T-cell (primary cell): ENCODE measurements at regions of chr5 and their contacts with region 1.

Region 1: DNA sequence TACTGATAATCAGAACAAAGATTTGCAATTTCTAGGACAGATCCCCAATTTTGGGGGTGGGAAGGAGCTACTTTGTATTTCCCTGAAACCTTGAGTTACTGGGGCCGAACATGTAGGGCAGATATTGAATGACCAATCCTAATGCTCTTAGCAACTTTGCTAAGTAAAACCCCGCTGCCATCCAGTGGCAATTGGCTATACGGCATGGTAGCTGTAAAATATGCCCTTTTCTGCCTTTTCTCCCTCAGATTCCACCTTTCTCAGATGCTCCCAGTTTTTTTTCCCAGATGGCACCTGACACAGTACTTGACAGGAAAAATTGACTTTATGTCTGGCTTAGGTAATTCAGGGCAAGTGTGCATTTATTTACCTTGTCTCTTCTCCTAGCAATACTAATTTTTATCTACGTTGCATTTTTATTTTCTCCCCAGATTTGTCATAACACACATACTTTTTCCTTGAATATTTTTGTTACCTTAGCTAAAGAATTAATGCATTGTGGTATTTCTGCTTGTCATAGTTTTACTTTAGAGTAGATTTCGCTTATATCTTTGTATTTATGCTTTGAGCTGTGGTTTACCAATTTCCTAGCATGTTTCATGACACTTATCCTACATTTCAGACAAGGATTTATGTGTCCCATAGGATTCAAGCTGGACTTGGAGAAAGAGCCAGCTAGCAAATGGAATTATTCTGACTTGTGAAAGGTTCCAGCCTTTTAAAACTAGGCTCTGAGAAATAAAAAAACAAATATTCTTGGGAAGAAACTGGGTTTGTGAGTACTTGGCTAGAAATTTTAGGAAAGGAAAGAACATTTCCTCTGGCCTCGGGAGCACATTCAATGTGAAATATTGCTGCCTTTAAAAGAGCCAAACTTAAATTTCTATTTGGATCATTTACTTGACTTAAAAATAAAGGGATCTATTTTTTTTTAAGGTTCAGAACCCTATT is 37.4 kb downstream of the PIK3R1 start:
- DNase-seq: peak in 25 of 35 experiments; percentile 10 to 71 (median 42)
- ATAC-seq: no peak
- H3K4me3 ChIP-seq: no peak overlapping the region
- H3K4me3 Mint-ChIP-seq: no peak overlapping the region
- H3K27ac ChIP-seq: peak overlapping the region; percentile 58
- H3K27ac Mint-ChIP-seq: peak overlapping the region; percentile 84 to 95
- H3K4me1 ChIP-seq: peaks cover 48 to 60% of the 10 kb centered on the region in 2 experiments
- H3K4me1 Mint-ChIP-seq: peaks cover 90 to 96% (median 93%) of the 10 kb centered on the region in 3 donors
- H3K27me3 ChIP-seq: no peaks in the 10 kb centered on the region
- H3K27me3 Mint-ChIP-seq: no peaks in the 10 kb centered on the region

Region 2: DNA sequence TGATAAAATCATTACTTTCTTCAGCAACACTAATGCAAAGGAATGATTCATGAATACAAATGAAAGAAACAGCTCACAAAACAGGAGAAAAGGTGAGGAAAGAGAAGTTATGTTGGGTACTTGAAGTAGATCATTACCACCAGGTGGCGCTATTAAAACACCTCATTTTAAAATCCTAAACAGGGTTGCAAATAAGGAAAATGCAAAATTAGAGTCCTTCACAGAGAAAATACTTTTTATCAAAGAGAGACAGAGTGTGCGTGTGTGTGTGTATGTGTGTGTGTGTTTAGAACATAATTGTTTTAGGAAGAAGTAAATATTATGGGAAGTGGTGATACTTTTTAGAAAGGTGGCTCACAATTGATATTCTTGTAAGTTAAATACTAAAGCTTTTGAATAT is 1006.8 kb before region 1 on chr5:
- CTCF ChIA-PET with region 1: interaction called, 20 to 35 read pairs
- POLR2A ChIA-PET with region 1: no interaction called
- DNase-seq: peak in 8 of 35 experiments; percentile 5 to 84 (median 22)
- ATAC-seq: peak in 2 of 4 experiments; percentile 47 to 69
- H3K4me3 ChIP-seq: no peak overlapping the region
- H3K4me3 Mint-ChIP-seq: no peak overlapping the region
- H3K27ac ChIP-seq: no peak overlapping the region
- H3K27ac Mint-ChIP-seq: no peak overlapping the region
- H3K4me1 ChIP-seq: peaks cover 0 to 7% of the 10 kb centered on the region in 2 experiments
- H3K4me1 Mint-ChIP-seq: peaks cover 6 to 15% (median 12%) of the 10 kb centered on the region in 3 donors
- H3K27me3 ChIP-seq: no peaks in the 10 kb centered on the region
- H3K27me3 Mint-ChIP-seq: no peaks in the 10 kb centered on the region

Region 3: GRCh38 chr5:68272289-68272688 is 19.3 kb after region 1 on chr5:
- CTCF ChIA-PET with region 1: interaction called, 8 to 19 read pairs
- POLR2A ChIA-PET with region 1: interaction called, 3 to 4 read pairs
- DNase-seq: peak in 1 of 35 experiments; percentile 51
- ATAC-seq: no peak
- H3K4me3 ChIP-seq: no peak overlapping the region
- H3K4me3 Mint-ChIP-seq: no peak overlapping the region
- H3K27ac ChIP-seq: no peak overlapping the region
- H3K27ac Mint-ChIP-seq: peak overlapping the region; percentile 17 to 98
- H3K4me1 ChIP-seq: peaks cover 26 to 41% of the 10 kb centered on the region in 2 experiments
- H3K4me1 Mint-ChIP-seq: peaks cover 77 to 96% (median 94%) of the 10 kb centered on the region in 3 donors
- H3K27me3 ChIP-seq: no peaks in the 10 kb centered on the region
- H3K27me3 Mint-ChIP-seq: no peaks in the 10 kb centered on the region

Region 4: DNA sequence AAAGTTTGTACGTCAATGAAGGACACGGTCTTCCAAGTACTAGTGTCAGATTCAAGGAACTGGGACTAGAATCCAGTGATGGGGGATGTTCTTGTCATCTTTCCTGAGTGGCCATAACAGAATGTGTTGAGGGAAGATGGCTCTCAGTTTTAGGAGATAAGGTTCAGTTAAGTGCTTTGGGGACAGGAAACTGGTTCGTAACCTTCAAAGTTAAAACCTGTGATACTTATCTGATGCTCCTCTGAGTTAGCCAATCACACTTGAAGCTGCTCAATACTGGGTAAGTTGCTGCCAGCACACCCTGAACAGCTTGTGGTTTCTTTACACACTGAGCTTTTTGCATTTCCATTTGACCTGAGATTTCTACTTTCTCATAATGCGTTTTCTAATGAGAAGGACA is 27.0 kb after region 1 on chr5:
- CTCF ChIA-PET with region 1: interaction called, 6 to 12 read pairs
- POLR2A ChIA-PET with region 1: interaction called in 1 of 2 experiments, 4 read pairs
- DNase-seq: peak in 32 of 35 experiments; percentile 24 to 88 (median 48)
- ATAC-seq: peak; percentile 93 to 97 (median 95)
- H3K4me3 ChIP-seq: peak overlapping the region; percentile 29 to 57
- H3K4me3 Mint-ChIP-seq: peak overlapping the region; percentile 85 to 88 (median 86)
- H3K27ac ChIP-seq: peak overlapping the region; percentile 84
- H3K27ac Mint-ChIP-seq: peak overlapping the region; percentile 98
- H3K4me1 ChIP-seq: peaks cover 46 to 49% of the 10 kb centered on the region in 2 experiments
- H3K4me1 Mint-ChIP-seq: peaks cover 86 to 91% (median 90%) of the 10 kb centered on the region in 3 donors
- H3K27me3 ChIP-seq: no peaks in the 10 kb centered on the region
- H3K27me3 Mint-ChIP-seq: no peaks in the 10 kb centered on the region

Region 5: GRCh38 chr5:68287976-68288706 is 35.2 kb after region 1 on chr5:
- CTCF ChIA-PET with region 1: interaction called, 3 to 10 read pairs
- POLR2A ChIA-PET with region 1: no interaction called
- DNase-seq: peak; percentile 7 to 67 (median 33)
- ATAC-seq: peak; percentile 79 to 86 (median 82)
- H3K4me3 ChIP-seq: peak overlapping the region; percentile 54 to 79
- H3K4me3 Mint-ChIP-seq: peak overlapping the region; percentile 85 to 90 (median 88)
- H3K27ac ChIP-seq: peak overlapping the region; percentile 61
- H3K27ac Mint-ChIP-seq: peak overlapping the region; percentile 96 to 98
- H3K4me1 ChIP-seq: peaks cover 41% of the 10 kb centered on the region in 2 experiments
- H3K4me1 Mint-ChIP-seq: peaks cover 89 to 91% (median 91%) of the 10 kb centered on the region in 3 donors
- H3K27me3 ChIP-seq: no peaks in the 10 kb centered on the region
- H3K27me3 Mint-ChIP-seq: no peaks in the 10 kb centered on the region

Region 6: DNA sequence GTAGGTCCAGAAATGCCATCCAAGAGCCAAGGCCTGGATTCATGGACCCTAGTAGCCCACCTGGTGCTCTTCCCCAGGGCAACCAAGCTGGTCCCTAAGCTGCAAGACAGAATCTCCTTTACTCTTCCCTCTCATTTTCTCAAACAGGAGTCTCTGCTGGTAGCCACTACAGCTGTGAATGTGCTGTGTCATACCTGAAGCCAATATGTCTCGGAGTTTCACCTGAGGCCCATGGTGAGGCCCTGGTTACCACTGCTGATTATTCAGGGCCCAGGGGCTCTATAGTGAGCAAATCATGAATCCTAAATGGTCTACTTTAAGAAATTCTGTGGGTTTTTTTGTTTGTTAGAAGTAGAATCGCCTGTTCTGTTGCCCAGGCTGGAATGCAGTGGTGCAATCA is 997.6 kb after region 1 on chr5:
- CTCF ChIA-PET with region 1: no interaction called
- POLR2A ChIA-PET with region 1: no interaction called
- DNase-seq: no peak
- ATAC-seq: no peak
- H3K4me3 ChIP-seq: no peak overlapping the region
- H3K4me3 Mint-ChIP-seq: no peak overlapping the region
- H3K27ac ChIP-seq: no peak overlapping the region
- H3K27ac Mint-ChIP-seq: no peak overlapping the region
- H3K4me1 ChIP-seq: no peaks in the 10 kb centered on the region
- H3K4me1 Mint-ChIP-seq: peaks cover 24 to 28% (median 26%) of the 10 kb centered on the region in 3 donors
- H3K27me3 ChIP-seq: no peaks in the 10 kb centered on the region
- H3K27me3 Mint-ChIP-seq: no peaks in the 10 kb centered on the region